ENCODE measurements at regions of chr11 and their contacts with region 1.

Region 1: DNA sequence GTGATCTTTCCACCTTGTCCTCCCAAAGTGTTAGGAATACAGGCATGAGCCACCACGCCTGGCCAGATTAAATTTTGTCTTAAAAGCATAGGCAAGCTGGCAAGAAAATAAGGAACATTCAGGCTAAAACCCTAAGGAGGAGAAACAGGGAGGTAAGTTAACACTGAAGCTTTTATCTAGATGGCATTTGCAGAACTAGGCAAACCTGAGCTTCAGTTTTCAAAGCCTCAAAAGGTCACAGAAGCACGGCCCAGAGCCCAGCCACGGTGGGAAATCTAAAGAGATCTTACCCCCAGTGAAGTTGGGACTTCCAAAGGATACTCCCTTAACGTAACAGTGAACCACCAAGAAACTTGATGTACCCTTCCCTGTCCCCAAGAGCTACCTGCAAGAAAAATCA is 28.4 kb downstream of the PC start:
- DNase-seq: no peak

Region 2: DNA sequence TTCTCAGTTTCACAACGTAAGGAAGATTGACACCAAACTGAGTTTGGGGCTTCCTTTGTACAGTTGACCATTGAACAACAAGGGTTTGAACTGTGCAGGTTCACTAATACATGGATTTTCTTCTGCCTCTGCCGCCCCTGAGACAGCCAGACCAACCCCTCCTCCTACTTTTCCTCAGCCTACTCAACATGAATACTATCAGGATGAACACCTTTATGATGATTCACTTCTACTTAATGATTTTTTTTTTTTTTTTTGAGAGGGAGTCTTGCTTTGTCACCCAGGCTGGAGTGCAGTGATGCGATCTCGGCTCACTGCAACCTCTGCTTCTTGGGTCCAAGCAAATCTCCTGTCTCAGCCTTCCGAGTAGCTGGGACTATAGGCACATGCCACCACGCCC is 276.6 kb before region 1 on chr11:
- in situ Hi-C with region 1: no loop called
- DNase-seq: no peak

Region 3: DNA sequence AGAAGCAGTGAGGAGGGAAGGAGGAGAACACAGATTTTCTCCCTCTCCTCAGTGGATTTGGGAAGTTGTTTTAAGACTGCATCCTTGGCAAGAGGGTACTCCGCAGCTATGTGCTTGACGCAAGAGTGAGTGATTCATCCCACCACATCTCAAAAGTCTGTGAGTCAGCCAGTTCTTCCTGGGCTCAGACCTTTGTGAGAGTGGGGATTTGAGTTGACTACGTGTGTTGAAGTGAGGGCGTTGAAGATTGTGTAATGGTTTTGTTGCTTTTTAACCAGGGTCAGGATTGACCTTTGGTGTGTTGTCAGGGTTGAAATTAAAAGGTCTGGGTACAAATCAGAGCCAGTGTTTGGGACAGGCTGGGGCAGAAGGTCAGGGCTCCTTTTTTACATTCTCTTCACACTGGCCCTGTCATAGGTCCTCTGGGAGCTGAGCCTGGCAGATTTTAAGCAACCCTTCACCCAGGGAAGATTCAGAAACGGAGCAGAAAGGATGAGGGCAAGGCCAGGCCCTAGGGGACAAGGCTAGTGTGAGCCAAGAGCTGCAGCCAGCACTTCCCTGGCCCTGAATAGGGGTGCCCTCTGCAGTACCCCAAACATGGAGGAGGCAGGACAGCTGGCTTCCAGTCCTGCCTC is 41.2 kb after region 1 on chr11:
- in situ Hi-C with region 1: loop called (anchors 5 kb)
- DNase-seq: no peak

Region 4: DNA sequence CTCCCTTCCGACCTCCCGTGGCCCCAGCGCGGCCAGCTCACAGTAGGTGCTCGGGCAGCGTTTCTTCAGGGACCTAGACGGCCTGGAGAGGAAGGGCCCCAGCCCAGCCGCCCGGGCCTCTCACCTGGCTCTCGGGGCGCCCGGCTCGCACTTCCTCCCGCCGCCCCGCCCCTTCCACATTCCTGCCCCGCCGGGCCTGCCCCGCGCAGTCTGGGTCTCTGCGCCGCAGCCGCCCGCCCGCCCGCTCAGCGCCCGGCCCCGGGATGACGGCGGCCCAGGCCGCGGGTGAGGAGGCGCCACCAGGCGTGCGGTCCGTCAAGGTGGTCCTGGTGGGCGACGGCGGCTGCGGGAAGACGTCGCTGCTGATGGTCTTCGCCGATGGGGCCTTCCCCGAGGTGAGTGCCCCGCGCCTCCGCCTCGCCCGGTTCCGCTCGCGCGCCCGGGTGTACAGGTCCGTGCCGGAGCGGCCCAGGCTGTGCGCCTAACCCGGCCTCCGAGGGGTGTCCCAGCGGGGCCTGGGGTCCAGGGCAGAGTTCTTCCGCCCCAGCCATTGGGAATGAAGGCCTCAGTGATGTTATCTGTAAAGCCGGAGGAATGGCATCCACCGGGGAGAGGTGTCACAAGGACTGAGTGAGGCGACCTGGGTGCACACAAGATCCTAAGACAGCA is 127.0 kb after region 1 on chr11 and contains the start of gene RHOD:
- in situ Hi-C with region 1: no loop called
- DNase-seq: no peak
- total RNA-seq, gene RHOD: not detected in 2 replicates